Activated CD4-positive, alpha-beta T cell treated with anti-CD3 and anti-CD28 coated beads for 36 hours (primary cell): ENCODE measurements at regions of chr17 and their contacts with region 1.

Region 1: DNA sequence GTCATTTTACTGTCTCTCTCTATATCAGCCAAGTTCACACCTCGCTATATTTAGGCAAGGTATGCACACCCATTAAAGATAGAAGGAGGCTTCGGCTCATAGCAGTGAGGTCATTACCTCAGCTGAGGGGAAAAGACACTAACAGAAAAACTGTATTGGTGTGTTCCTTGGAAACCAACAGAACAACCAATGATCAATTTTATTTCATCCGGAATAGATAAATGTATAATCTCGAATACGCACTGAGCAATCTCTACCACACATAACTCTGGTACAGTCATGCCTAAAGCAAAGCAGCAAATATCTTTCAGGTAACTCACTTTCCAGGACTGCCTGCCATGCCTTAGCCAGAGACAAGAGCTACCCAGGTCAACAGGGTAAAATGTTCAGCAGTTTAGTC is 109.9 kb upstream of the CORO6 start:
- DNase-seq: no peak
- ATAC-seq: no peak
- H3K4me3 Mint-ChIP-seq: no peak overlapping the region
- H3K27ac Mint-ChIP-seq: no peak overlapping the region
- H3K4me1 Mint-ChIP-seq: peaks cover 45% of the 10 kb centered on the region
- H3K27me3 Mint-ChIP-seq: no peaks in the 10 kb centered on the region

Region 2: GRCh38 chr17:29140051-29140621 is 592.5 kb before region 1 on chr17:
- CTCF ChIA-PET with region 1: no interaction called
- POLR2A ChIA-PET with region 1: no interaction called
- intact Hi-C with region 1: no loop called
- DNase-seq: peak; percentile 92
- ATAC-seq: peak; percentile 60
- H3K4me3 Mint-ChIP-seq: peak overlapping the region; percentile 89
- H3K27ac Mint-ChIP-seq: peak overlapping the region; percentile 97
- H3K4me1 Mint-ChIP-seq: peaks cover 74% of the 10 kb centered on the region
- H3K27me3 Mint-ChIP-seq: no peaks in the 10 kb centered on the region

Region 3: DNA sequence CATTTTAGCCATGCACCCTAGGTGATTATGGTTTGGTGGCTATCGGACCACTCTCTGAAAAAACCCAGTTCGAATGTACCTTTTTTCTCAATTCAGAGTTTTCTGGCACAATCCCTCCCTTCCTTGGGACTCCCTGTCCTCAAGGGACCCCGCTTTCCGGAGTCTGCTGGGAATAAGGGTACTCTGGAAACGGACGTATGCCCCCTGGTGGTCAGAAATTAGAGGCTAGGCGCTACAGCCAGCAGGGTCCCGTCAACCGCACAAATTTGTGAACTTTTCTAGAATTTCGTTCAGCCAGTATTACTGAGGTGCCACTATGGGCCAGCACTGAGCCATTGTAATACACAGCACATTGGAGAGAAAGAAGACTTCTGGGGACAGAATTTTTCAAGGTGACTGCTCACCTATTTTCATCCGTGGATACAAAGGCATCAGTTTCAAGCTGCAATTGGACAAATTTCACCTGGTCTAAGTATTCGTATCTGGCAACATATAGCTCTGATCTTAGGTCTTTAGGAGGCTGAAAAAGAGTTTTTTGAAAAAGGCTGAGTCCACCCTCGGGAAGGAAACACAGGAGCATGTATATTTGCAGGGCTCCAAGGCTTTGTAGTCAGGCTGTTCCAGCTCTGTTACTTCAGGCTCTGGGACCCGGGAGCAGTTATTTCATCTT is 513.1 kb before region 1 on chr17:
- CTCF ChIA-PET with region 1: no interaction called
- POLR2A ChIA-PET with region 1: no interaction called
- intact Hi-C with region 1: no loop called
- DNase-seq: peak; percentile 85
- ATAC-seq: peak; percentile 97
- H3K4me3 Mint-ChIP-seq: peak overlapping the region; percentile 17
- H3K27ac Mint-ChIP-seq: no peak overlapping the region
- H3K4me1 Mint-ChIP-seq: peaks cover 6% of the 10 kb centered on the region
- H3K27me3 Mint-ChIP-seq: no peaks in the 10 kb centered on the region

Region 4: GRCh38 chr17:29710891-29711418 is 21.7 kb before region 1 on chr17:
- CTCF ChIA-PET with region 1: no interaction called
- POLR2A ChIA-PET with region 1: no interaction called
- intact Hi-C with region 1: no loop called
- DNase-seq: no peak
- ATAC-seq: no peak
- H3K4me3 Mint-ChIP-seq: no peak overlapping the region
- H3K27ac Mint-ChIP-seq: peak overlapping the region; percentile 43
- H3K4me1 Mint-ChIP-seq: peaks cover 70% of the 10 kb centered on the region
- H3K27me3 Mint-ChIP-seq: no peaks in the 10 kb centered on the region

Region 5: DNA sequence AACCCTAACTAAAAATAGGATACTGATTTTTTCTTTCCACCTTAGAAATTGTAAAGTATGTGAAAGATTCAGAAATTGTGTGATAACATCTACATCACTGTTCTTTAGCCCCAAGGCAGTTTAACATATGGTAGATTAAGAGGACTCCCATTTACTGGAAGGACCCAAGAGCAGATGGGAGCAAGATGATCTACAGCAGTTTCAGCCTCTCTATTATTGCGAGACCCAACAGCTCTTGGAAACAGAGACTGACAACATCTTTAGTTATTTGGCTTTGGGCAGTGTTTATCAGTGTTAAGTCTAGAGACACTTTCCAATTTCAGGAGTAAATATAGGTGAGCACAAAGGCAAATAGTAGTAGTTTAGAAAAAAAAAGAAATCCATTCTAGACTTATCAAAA is 15.0 kb after region 1 on chr17:
- CTCF ChIA-PET with region 1: interaction called, 3 read pairs
- POLR2A ChIA-PET with region 1: no interaction called
- intact Hi-C with region 1: loop called in 1 of 2 experiments (anchors 2 kb)
- DNase-seq: no peak
- ATAC-seq: no peak
- H3K4me3 Mint-ChIP-seq: no peak overlapping the region
- H3K27ac Mint-ChIP-seq: no peak overlapping the region
- H3K4me1 Mint-ChIP-seq: peaks cover 58% of the 10 kb centered on the region
- H3K27me3 Mint-ChIP-seq: no peaks in the 10 kb centered on the region

Region 6: GRCh38 chr17:29821897-29822296 is 89.3 kb after region 1 on chr17:
- CTCF ChIA-PET with region 1: no interaction called
- POLR2A ChIA-PET with region 1: no interaction called
- intact Hi-C with region 1: no loop called
- DNase-seq: no peak
- ATAC-seq: no peak
- H3K4me3 Mint-ChIP-seq: no peak overlapping the region
- H3K27ac Mint-ChIP-seq: no peak overlapping the region
- H3K4me1 Mint-ChIP-seq: peaks cover 10% of the 10 kb centered on the region
- H3K27me3 Mint-ChIP-seq: no peaks in the 10 kb centered on the region